ENCODE measurements at regions of chr14 and their contacts with region 1.

Region 1: DNA sequence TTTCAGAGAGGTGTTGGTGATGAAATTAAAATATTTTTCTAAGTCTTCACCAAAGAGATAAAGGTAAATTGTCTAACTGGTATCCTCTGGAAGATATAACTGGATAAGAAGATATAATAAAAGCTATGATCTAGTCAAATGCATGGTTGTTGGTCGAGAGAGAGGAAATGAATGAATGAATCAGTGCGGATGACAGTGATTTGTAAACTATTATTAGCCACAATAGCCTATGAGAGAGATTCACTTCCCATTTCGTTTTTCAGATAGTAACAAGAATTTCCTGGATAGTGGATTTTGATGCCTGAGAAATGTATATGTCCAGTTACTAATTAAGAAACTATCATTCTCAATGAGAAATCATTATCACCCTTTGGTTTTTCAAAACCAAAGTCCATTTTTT is 63.1 kb downstream of the HEATR5A start:
- DNase-seq: no peak
- H3K4me3 ChIP-seq: no peak overlapping the region
- H3K27ac ChIP-seq: no peak overlapping the region
- H3K4me1 ChIP-seq: no peaks in the 10 kb centered on the region
- H3K27me3 ChIP-seq: no peaks in the 10 kb centered on the region
- CTCF ChIP-seq: no peak

Region 2: DNA sequence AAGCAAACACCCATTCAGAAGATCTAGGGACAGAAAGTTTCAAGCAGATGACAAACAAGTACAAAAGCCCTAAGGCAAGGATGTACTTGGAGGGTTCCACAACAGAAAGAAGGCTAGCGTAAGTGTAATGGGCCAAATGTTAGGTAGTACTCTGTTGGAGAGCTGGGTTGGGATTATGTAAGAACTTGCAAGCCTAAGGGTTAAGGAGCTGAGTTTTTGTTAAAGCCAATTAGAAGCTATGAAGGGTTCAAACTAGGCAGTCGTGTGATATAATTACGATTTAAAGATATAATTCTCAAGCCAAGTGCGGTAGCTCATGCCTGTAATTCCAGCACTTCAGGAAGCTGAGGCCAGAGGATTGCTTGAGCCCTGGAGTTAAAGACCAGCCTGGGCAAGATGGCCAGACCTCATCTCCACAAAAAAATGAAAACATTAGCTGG is 191.0 kb before region 1 on chr14:
- intact Hi-C with region 1: loop called (anchors 5 kb)
- DNase-seq: no peak
- H3K4me3 ChIP-seq: no peak overlapping the region
- H3K27ac ChIP-seq: peak overlapping the region; percentile 80 to 92
- H3K4me1 ChIP-seq: peaks cover 7 to 21% of the 10 kb centered on the region in 2 donors
- H3K27me3 ChIP-seq: no peaks in the 10 kb centered on the region
- CTCF ChIP-seq: no peak